ENCODE measurements at regions of chr12 and their contacts with region 1.

Region 1: GRCh38 chr12:71754461-71755145 is at the start of gene RAB21:
- DNase-seq: peak; percentile 95 to 99
- H3K4me3 ChIP-seq: peak within 1 kb of the TSS; percentile 91 to 96
- H3K27ac ChIP-seq: peak within 1 kb of the TSS; percentile 97 to 98
- H3K4me1 ChIP-seq: peaks cover 4 to 12% of the 10 kb centered on the region in 2 donors
- H3K27me3 ChIP-seq: no peaks in the 10 kb centered on the region
- CTCF ChIP-seq: peak; percentile 21 to 48 (median 46)
- total RNA-seq, gene RAB21: 6.5 TPM

Region 2: GRCh38 chr12:70994217-70994788 is 760.3 kb before region 1 on chr12:
- intact Hi-C with region 1: loop called (anchors 10 kb)
- DNase-seq: no peak
- H3K4me3 ChIP-seq: no peak overlapping the region
- H3K27ac ChIP-seq: peak overlapping the region; percentile 59 to 84
- H3K4me1 ChIP-seq: peaks cover 6% of the 10 kb centered on the region in 2 donors
- H3K27me3 ChIP-seq: no peaks in the 10 kb centered on the region
- CTCF ChIP-seq: no peak

Region 3: GRCh38 chr12:71476513-71476912 is 278.1 kb before region 1 on chr12:
- intact Hi-C with region 1: loop called (anchors 2 kb)
- DNase-seq: peak in 1 of 2 donors; percentile 84
- H3K4me3 ChIP-seq: no peak overlapping the region
- H3K27ac ChIP-seq: peak overlapping the region; percentile 67 to 77
- H3K4me1 ChIP-seq: peaks cover 0 to 18% of the 10 kb centered on the region in 2 donors
- H3K27me3 ChIP-seq: no peaks in the 10 kb centered on the region
- CTCF ChIP-seq: no peak

Region 4: GRCh38 chr12:71663561-71664294 is 90.9 kb before region 1 on chr12 and contains the start of gene ZFC3H1:
- intact Hi-C with region 1: loop called (anchors 1 kb)
- DNase-seq: peak; percentile 92 to 97
- H3K4me3 ChIP-seq: peak within 1 kb of the TSS; percentile 91 to 95
- H3K27ac ChIP-seq: peak within 1 kb of the TSS; percentile 96 to 98
- H3K4me1 ChIP-seq: peaks cover 0 to 17% of the 10 kb centered on the region in 2 donors
- H3K27me3 ChIP-seq: no peaks in the 10 kb centered on the region
- CTCF ChIP-seq: peak in 2 of 3 experiments; percentile 24 to 32
- total RNA-seq, gene ZFC3H1: 15.8 TPM

Region 5: DNA sequence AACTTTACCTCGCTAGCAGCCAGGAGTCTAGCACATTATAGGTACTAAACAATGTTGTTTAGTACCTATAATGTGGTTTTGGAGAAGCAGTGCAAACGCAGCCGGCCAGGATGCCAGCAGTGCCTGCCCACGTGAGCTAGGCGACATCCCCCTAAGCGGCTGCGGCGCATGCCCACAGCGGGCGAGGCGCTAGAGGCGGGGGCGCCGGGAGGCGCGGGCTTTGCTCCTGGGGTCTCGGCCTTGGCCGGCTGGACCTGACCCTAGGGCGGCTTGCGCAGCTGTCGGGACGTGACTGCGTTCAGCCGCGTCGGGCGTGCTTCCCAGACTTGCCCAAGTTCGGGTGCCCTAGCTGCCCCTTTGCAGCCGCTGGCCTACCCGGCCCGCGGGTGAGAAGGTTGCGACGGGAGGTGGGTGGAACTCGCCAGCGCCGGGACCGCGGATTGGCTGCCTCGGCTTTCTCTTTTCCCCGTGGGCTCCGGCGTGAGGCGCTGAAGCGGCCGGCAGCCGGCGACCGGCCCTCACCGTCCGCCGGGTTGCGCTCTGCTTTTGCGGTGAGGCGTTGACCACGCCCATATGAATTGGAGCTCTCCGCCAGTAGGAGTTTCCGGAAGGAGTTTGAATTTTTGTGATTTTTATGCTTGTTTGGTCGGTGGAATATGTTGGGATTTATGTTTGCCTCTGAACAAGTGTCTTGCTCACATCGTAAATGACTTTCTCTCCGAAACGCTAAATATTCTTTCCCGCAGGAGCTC is 68.5 kb before region 1 on chr12 and contains the start of gene TMEM19:
- intact Hi-C with region 1: loop called (anchors 2 kb)
- DNase-seq: peak; percentile 69 to 93
- H3K4me3 ChIP-seq: peak within 1 kb of the TSS; percentile 68 to 92
- H3K27ac ChIP-seq: peak within 1 kb of the TSS; percentile 73 to 81
- H3K4me1 ChIP-seq: peaks cover 0 to 10% of the 10 kb centered on the region in 2 donors
- H3K27me3 ChIP-seq: no peaks in the 10 kb centered on the region
- CTCF ChIP-seq: peak in 1 of 3 experiments; percentile 38
- total RNA-seq, gene TMEM19: 14.5 TPM

Region 6: GRCh38 chr12:71840231-71840847 is 85.7 kb after region 1 on chr12:
- intact Hi-C with region 1: loop called (anchors 1 kb)
- DNase-seq: no peak
- H3K4me3 ChIP-seq: peak overlapping the region; percentile 73 to 78
- H3K27ac ChIP-seq: peak overlapping the region; percentile 93 to 96
- H3K4me1 ChIP-seq: peaks cover 0 to 7% of the 10 kb centered on the region in 2 donors
- H3K27me3 ChIP-seq: no peaks in the 10 kb centered on the region
- CTCF ChIP-seq: no peak

Measured in ascending aorta (tissue), 2 donors.